Caco-2 (cell line): ENCODE measurements at regions of chr13 and their contacts with region 1.

Region 1: GRCh38 chr13:33116431-33116877 is 100.2 kb downstream of the KL start:
- DNase-seq: peak in 1 of 2 experiments; percentile 33
- H3K4me3 ChIP-seq: no peak overlapping the region
- H3K4me3 Mint-ChIP-seq: no peak overlapping the region
- H3K27ac Mint-ChIP-seq: peak overlapping the region; percentile 21
- H3K4me1 ChIP-seq: peaks cover 54% of the 10 kb centered on the region
- H3K4me1 Mint-ChIP-seq: peaks cover 63% of the 10 kb centered on the region
- H3K27me3 ChIP-seq: no peaks in the 10 kb centered on the region
- H3K27me3 Mint-ChIP-seq: no peaks in the 10 kb centered on the region
- CTCF ChIP-seq: no peak

Region 2: GRCh38 chr13:33101835-33102234 is 14.6 kb before region 1 on chr13:
- CTCF ChIA-PET with region 1: no interaction called
- POLR2A ChIA-PET with region 1: no interaction called
- intact Hi-C with region 1: loop called (anchors 1 kb)
- DNase-seq: peak in 1 of 2 experiments; percentile 39
- H3K4me3 ChIP-seq: no peak overlapping the region
- H3K4me3 Mint-ChIP-seq: no peak overlapping the region
- H3K27ac Mint-ChIP-seq: peak overlapping the region; percentile 49
- H3K4me1 ChIP-seq: peaks cover 13% of the 10 kb centered on the region
- H3K4me1 Mint-ChIP-seq: peaks cover 17% of the 10 kb centered on the region
- H3K27me3 ChIP-seq: no peaks in the 10 kb centered on the region
- H3K27me3 Mint-ChIP-seq: no peaks in the 10 kb centered on the region
- CTCF ChIP-seq: no peak

Region 3: DNA sequence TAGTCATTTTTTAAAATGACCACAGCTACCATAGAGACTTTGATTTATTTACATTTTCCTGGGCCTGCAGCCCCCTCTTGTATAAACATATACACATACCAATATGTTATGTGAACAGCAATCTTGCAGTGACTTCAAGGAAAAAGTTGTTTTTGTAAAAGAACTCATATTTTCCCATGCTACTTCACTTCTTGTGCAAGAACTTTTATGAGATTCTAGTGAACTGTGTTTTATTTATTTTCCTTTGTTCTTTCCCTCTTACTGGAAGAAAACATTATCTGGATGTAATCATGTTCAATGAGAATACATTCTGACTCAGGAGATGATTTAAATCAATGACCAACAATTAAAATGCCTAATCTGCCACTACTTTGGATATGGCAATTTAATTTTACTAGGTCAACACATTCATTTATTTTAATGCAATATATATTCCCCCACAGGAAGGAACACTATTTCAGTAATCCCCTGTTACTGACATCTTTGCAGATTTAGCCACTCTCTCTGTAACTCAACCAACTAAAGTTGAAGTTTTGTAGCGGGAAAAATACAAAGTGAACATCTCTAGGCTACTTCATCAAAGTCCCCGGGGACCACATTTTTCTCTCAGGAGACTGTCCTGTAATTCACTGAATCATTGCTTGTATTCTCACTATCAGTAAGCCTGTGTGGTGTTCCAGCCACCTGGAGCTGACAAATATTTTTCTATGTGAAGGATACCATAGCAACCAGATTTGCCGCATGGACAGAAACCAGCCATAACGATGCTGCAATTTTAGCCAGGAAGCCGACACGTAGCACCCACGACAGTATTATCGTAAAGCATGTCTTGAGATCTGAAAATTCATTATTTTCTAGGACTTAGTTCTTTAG is 78.6 kb after region 1 on chr13:
- CTCF ChIA-PET with region 1: no interaction called
- POLR2A ChIA-PET with region 1: no interaction called
- intact Hi-C with region 1: no loop called
- DNase-seq: peak in 1 of 2 experiments; percentile 36
- H3K4me3 ChIP-seq: no peak overlapping the region
- H3K4me3 Mint-ChIP-seq: no peak overlapping the region
- H3K27ac Mint-ChIP-seq: peak overlapping the region; percentile 21
- H3K4me1 ChIP-seq: peaks cover 9% of the 10 kb centered on the region
- H3K4me1 Mint-ChIP-seq: peaks cover 18% of the 10 kb centered on the region
- H3K27me3 ChIP-seq: no peaks in the 10 kb centered on the region
- H3K27me3 Mint-ChIP-seq: no peaks in the 10 kb centered on the region
- CTCF ChIP-seq: no peak